ENCODE measurements at regions of chr2 and their contacts with region 1.

Region 1: DNA sequence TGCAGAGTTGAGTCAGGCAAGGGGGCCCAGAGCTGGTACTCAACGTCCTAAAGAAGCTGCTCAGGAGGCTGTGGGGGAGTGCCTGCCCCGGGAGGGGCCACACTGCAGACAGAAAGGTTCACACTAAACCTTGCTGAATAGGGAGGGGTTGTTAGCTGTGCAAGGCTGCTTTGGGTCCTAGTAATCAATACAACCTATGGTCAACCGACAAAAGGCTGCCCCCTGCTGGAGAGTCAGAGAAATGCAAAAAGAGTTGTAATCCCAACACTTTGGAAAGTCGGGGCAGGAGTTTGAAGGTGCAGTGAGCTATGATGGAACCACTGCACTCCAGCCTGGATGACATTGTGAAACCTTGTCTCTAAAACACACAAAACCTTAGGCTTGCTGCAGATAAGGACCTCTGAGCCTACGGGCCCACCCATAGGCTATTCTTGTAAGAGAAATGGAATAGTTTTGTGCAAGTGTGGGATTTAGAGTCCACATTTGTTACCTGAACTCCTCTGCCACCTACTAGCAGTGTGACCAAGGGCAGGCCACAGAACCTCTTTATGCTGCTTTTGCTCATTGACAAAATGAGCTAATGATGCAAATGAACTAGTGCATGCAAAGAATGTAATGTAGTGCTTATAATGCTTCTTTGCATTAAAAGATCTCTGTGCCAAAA is 81.5 kb downstream of the PRPF40A start:
- DNase-seq: peak; percentile 60
- H3K4me3 ChIP-seq: no peak overlapping the region
- H3K27ac ChIP-seq: no peak overlapping the region
- H3K4me1 ChIP-seq: no peaks in the 10 kb centered on the region
- H3K27me3 ChIP-seq: no peaks in the 10 kb centered on the region
- CTCF ChIP-seq: peak; percentile 86
- EP300 ChIP-seq: no peak
- RAD21 ChIP-seq: peak; percentile 80

Region 2: GRCh38 chr2:152036611-152037469 is 598.9 kb before region 1 on chr2:
- CTCF ChIA-PET with region 1: interaction called, 13 read pairs
- POLR2A ChIA-PET with region 1: no interaction called
- DNase-seq: peak; percentile 66
- H3K4me3 ChIP-seq: no peak overlapping the region; a peak in 1 of 4 replicates
- H3K27ac ChIP-seq: no peak overlapping the region
- H3K4me1 ChIP-seq: no peaks in the 10 kb centered on the region; a peak in 1 of 4 replicates
- H3K27me3 ChIP-seq: no peaks in the 10 kb centered on the region
- CTCF ChIP-seq: peak; percentile 85
- EP300 ChIP-seq: no peak
- RAD21 ChIP-seq: peak; percentile 96

Region 3: DNA sequence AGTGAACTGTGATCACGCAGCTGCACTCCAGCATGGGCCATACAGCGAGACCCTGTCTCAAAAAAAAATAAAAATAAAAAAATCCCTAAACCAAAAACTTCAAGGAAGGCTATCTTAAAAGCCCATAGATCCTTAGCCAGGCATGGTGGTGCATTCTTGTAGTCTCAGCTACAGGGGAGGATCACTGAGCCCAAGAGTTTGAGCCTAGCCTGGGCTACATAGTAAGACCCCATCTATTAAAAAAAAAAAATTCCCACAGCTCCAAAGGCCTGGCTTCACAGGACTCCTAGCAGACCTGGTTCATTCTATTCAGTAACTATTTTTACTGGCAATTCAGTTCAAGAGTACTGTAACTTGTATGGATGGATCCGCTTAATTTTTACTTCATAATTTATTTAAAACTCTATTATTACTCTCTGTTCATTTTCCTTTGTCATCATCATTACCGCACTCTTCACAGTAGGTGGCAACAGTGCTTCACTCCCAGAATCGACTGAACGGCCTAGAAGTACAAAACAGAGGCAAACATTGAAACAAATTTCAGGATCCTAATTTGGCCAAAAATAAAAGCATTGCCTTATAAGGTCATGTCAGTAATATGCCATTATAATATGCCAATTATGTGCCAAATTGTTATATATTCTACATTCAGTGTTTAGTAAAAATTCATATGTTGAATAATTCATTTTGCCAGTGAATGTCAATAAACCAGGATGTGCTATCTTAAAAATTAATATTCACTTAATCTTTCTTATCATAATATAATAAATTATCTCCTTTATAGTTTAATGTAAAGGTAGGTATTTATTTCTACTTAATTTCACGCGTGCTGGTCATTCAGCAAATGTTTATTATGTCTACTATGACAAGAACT is 445.9 kb before region 1 on chr2:
- CTCF ChIA-PET with region 1: interaction called, 37 read pairs
- POLR2A ChIA-PET with region 1: no interaction called
- DNase-seq: peak; percentile 50
- H3K4me3 ChIP-seq: no peak overlapping the region; a peak in 1 of 4 replicates
- H3K27ac ChIP-seq: no peak overlapping the region
- H3K4me1 ChIP-seq: no peaks in the 10 kb centered on the region
- H3K27me3 ChIP-seq: no peaks in the 10 kb centered on the region
- CTCF ChIP-seq: peak; percentile 94
- EP300 ChIP-seq: no peak
- RAD21 ChIP-seq: peak; percentile 97

Region 4: GRCh38 chr2:152566728-152567069 is 69.1 kb before region 1 on chr2:
- CTCF ChIA-PET with region 1: no interaction called
- POLR2A ChIA-PET with region 1: no interaction called
- DNase-seq: no peak
- H3K4me3 ChIP-seq: no peak overlapping the region
- H3K27ac ChIP-seq: no peak overlapping the region
- H3K4me1 ChIP-seq: peaks cover 3 to 11% of the 10 kb centered on the region in 2 experiments; a peak in 3 of 4 replicates
- H3K27me3 ChIP-seq: no peaks in the 10 kb centered on the region
- CTCF ChIP-seq: no peak
- EP300 ChIP-seq: no peak
- RAD21 ChIP-seq: no peak

Region 5: GRCh38 chr2:152615177-152615576 is 20.6 kb before region 1 on chr2:
- CTCF ChIA-PET with region 1: interaction called, 28 read pairs
- POLR2A ChIA-PET with region 1: no interaction called
- DNase-seq: no peak
- H3K4me3 ChIP-seq: no peak overlapping the region
- H3K27ac ChIP-seq: no peak overlapping the region
- H3K4me1 ChIP-seq: peaks cover 9 to 12% of the 10 kb centered on the region in 2 experiments; a peak in 3 of 4 replicates
- H3K27me3 ChIP-seq: no peaks in the 10 kb centered on the region
- CTCF ChIP-seq: no peak
- EP300 ChIP-seq: no peak
- RAD21 ChIP-seq: no peak

Region 6: DNA sequence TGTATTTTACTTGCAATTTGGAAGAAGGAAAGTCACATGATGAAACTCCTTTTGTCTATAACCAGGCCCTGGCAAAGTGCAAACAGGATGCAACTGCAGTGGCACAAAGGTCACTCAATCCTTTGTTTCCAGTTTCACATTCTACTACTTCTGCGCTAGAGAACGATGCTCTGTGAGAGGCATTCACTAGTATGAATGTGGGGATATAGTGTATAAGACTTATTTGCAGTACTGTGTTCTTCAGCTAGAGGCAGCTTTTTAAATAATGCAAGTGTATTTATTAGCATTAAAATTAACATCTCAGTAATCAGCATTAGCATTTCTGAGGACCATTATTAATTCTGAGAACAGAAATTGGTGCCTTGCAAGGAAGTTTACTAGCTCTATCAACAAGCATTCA is 12.6 kb after region 1 on chr2:
- CTCF ChIA-PET with region 1: interaction called, 32 read pairs
- POLR2A ChIA-PET with region 1: no interaction called
- DNase-seq: no peak
- H3K4me3 ChIP-seq: no peak overlapping the region
- H3K27ac ChIP-seq: peak overlapping the region in 1 of 2 experiments; percentile 79; a peak in 3 of 4 replicates
- H3K4me1 ChIP-seq: peaks cover 8 to 10% of the 10 kb centered on the region in 2 experiments
- H3K27me3 ChIP-seq: no peaks in the 10 kb centered on the region
- CTCF ChIP-seq: peak; percentile 46
- EP300 ChIP-seq: no peak
- RAD21 ChIP-seq: no peak